ENCODE measurements at regions of chr10 and their contacts with region 1.

Region 1: DNA sequence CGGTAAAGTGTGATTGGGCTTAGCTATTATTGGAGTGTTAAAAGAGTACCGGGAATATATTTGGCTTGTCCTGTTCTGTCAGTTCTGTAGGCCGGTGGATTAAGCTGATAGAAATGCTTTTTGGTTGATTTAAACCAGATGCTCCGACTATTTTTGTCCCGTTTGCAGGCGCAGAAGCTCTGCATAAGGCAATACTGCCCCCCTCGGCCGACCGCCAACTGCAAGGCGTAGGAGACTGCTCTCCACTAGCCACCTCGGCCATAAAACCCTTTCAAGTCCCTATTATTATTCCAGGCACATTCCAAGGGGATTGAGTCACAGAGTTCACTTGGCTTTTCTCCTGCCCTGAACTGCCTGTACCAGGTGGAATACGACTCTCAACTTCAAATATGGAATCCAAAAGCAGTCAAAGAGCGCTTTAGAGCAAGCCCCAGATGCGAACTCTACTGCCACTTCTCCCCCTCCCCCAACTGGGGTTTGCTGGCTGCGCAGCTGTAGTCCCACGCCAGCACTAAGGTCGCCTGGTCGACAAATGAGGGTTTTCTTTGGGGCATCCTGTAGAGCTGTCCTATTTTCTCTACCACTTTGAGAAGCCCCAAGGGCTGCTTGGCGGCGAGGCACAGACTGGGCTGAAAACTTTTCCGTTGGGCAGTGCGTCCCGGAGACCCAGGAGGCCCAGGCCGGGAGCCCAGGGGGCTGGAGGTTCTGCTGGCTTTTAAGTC is 108.3 kb downstream of the REEP3 start:
- DNase-seq: peak; percentile 92
- ATAC-seq: peak; percentile 74
- H3K4me3 Mint-ChIP-seq: peak overlapping the region; percentile 78
- H3K27ac Mint-ChIP-seq: peak overlapping the region; percentile 86
- H3K4me1 Mint-ChIP-seq: peaks cover 25% of the 10 kb centered on the region
- H3K27me3 Mint-ChIP-seq: peaks cover 3% of the 10 kb centered on the region
- CTCF ChIP-seq: peak; percentile 90

Region 2: DNA sequence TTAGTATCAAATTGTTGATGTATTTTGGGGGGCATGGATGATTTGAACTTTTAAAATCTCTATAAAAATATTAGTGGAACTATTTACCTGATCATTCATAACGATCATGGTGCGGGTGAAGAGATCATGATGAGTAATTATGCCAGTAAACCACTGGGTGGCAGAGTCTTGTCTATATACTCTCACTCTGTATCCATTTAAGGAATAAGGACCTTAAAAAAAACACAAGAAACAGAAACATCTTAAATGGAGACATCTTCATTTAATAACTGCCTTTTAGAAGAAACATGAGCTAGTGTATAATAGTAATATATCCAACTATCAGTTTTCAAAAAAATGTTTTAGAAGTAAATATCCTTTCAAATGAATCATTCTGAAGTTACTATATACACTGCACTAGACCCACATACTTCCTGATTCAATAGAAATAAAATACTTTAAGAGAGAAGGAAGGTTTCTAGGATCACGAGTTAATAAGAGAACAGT is 412.4 kb before region 1 on chr10:
- CTCF ChIA-PET with region 1: interaction called, 23 read pairs
- POLR2A ChIA-PET with region 1: interaction called, 3 read pairs
- intact Hi-C with region 1: loop called (anchors 2 kb)
- DNase-seq: peak; percentile 21
- ATAC-seq: peak; percentile 88
- H3K4me3 Mint-ChIP-seq: no peak overlapping the region
- H3K27ac Mint-ChIP-seq: peak overlapping the region; percentile 32
- H3K4me1 Mint-ChIP-seq: peaks cover 60% of the 10 kb centered on the region
- H3K27me3 Mint-ChIP-seq: no peaks in the 10 kb centered on the region
- CTCF ChIP-seq: peak; percentile 78

Region 3: GRCh38 chr10:63465293-63466143 is 164.0 kb before region 1 on chr10 and contains the start of gene JMJD1C:
- CTCF ChIA-PET with region 1: interaction called, 18 read pairs
- POLR2A ChIA-PET with region 1: no interaction called
- intact Hi-C with region 1: no loop called
- DNase-seq: peak; percentile 69
- ATAC-seq: peak; percentile 77
- H3K4me3 Mint-ChIP-seq: peak within 1 kb of the TSS; percentile 94
- H3K27ac Mint-ChIP-seq: peak within 1 kb of the TSS; percentile 75
- H3K4me1 Mint-ChIP-seq: peaks cover 24% of the 10 kb centered on the region
- H3K27me3 Mint-ChIP-seq: no peaks in the 10 kb centered on the region
- CTCF ChIP-seq: no peak
- total RNA-seq, gene JMJD1C: 45.2 to 48.1 TPM

Region 4: GRCh38 chr10:63521416-63522276 is 107.9 kb before region 1 on chr10:
- CTCF ChIA-PET with region 1: interaction called, 4 read pairs
- POLR2A ChIA-PET with region 1: no interaction called
- intact Hi-C with region 1: loop called (anchors 10 kb)
- DNase-seq: peak; percentile 60
- ATAC-seq: peak; percentile 65
- H3K4me3 Mint-ChIP-seq: peak overlapping the region; percentile 88
- H3K27ac Mint-ChIP-seq: peak overlapping the region; percentile 92
- H3K4me1 Mint-ChIP-seq: peaks cover 51% of the 10 kb centered on the region
- H3K27me3 Mint-ChIP-seq: no peaks in the 10 kb centered on the region
- CTCF ChIP-seq: no peak

Region 5: DNA sequence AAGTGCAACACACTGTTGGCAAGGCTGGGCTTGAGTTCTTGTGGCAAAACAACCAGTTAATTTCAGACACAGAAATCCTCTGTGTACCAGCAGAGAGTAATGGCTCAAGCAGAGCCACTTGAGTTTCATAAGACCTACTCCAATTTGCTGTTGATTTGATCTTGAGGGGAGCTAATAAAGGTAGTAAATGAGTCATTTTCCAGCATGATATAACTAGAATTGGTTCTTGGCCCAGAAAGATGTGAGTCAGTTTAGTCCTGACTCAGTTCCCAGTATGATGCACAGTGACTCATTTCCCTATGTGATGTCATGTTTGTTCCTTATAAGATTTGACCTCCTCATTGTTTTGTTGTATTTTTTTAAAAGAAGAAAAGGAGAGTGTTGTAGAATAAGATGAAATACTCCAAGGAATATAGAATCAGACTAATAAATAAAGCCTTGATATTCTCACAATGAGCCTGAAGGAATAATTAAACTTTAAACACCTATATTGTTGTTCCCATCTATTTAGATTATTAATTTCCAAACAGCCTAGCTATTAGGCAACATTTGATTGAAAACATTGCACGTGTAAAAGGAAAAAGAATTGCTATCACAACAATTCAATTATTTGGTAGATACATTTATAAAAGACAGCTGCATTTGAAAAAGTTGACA is 77.9 kb after region 1 on chr10:
- CTCF ChIA-PET with region 1: interaction called, 13 read pairs
- POLR2A ChIA-PET with region 1: interaction called, 3 read pairs
- intact Hi-C with region 1: no loop called
- DNase-seq: peak; percentile 51
- ATAC-seq: peak; percentile 94
- H3K4me3 Mint-ChIP-seq: no peak overlapping the region
- H3K27ac Mint-ChIP-seq: peak overlapping the region; percentile 48
- H3K4me1 Mint-ChIP-seq: peaks cover 37% of the 10 kb centered on the region
- H3K27me3 Mint-ChIP-seq: no peaks in the 10 kb centered on the region
- CTCF ChIP-seq: no peak